IMR-90 (cell line): ENCODE measurements at regions of chr12 and their contacts with region 1.

Region 1: GRCh38 chr12:57782608-57783465 is at the start of gene TSFM:
- DNase-seq: peak; percentile 93
- ATAC-seq: peak; percentile 98
- H3K4me3 ChIP-seq: peak within 1 kb of the TSS; percentile 94
- H3K27ac ChIP-seq: peak within 1 kb of the TSS; percentile 73
- H3K4me1 ChIP-seq: 0 out of 2 replicates have a peak, but pooled peaks cover 2% of the 10 kb centered on the region
- H3K27me3 ChIP-seq: no peaks in the 10 kb centered on the region
- CTCF ChIP-seq: peak; percentile 97
- POLR2A ChIP-seq: peak; percentile 61
- RAD21 ChIP-seq: peak; percentile 50
- total RNA-seq, gene TSFM: 10.8 and 11.5 TPM in 2 replicates

Region 2: DNA sequence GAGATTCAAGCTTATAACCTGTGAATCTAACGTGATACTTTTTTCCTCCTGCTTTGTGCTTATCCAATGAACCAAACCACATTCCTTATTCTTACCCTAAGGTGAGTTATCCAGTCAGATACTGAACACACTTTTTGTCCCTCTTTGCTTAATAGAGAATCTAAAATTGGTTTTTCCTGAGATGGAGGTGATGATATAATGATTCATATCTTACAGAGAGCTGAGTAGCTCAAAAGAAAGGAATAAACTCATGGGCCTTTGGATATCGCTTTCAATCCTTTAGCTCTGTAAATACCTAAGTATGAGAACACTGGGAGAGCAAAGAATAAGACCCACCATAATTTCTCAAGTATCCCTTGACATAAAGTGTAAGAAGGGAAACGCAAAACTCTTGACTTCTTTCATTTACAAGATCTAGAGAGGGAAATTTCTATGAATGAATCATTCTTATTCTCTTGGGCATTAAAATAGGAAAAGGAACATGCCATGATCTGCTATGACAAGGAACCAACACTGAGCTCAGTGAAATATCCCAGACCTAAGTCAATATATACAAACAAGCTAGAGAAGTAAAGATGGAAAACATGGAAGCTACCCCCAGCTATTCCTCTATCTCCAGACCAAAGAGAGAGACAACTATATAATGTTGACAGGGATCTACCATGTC is 450.1 kb before region 1 on chr12:
- CTCF ChIA-PET with region 1: no interaction called
- POLR2A ChIA-PET with region 1: no interaction called
- dilution Hi-C with region 1: no loop called
- in situ Hi-C with region 1: no loop called
- intact Hi-C with region 1: no loop called
- DNase-seq: peak; percentile 25
- ATAC-seq: peak; percentile 37; the same call in 1 of the 2 replicates
- H3K4me3 ChIP-seq: no peak overlapping the region
- H3K27ac ChIP-seq: no peak overlapping the region
- H3K4me1 ChIP-seq: no peaks in the 10 kb centered on the region
- H3K27me3 ChIP-seq: no peaks in the 10 kb centered on the region
- CTCF ChIP-seq: no peak
- POLR2A ChIP-seq: no peak
- RAD21 ChIP-seq: no peak

Region 3: DNA sequence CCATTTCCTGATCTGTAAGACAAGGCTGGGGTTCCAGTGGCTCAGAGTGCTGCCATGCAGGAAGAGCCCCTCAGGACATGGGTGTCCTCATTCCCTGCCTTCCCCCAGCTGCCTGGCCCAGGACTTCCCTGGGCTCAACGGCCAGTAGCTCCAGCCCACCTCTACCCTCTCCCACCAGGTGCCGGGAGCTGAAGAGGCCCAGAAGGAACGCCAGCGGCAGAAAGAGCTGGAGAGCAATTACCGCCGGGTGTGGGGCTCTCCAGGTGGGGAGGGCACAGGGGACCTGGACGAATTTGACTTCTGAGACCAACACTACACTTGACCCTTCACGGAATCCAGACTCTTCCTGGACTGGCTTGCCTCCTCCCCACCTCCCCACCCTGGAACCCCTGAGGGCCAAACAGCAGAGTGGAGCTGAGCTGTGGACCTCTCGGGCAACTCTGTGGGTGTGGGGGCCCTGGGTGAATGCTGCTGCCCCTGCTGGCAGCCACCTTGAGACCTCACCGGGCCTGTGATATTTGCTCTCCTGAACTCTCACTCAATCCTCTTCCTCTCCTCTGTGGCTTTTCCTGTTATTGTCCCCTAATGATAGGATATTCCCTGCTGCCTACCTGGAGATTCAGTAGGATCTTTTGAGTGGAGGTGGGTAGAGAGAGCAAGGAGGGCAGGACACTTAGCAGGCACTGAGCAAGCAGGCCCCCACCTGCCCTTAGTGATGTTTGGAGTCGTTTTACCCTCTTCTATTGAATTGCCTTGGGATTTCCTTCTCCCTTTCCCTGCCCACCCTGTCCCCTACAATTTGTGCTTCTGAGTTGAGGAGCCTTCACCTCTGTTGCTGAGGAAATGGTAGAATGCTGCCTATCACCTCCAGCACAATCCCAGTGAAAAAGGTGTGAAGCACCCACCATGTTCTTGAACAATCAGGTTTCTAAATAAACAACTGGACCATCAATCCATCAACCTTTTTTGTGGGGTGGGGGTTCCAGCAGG is 61.9 kb before region 1 on chr12:
- CTCF ChIA-PET with region 1: no interaction called
- POLR2A ChIA-PET with region 1: no interaction called
- dilution Hi-C with region 1: no loop called
- in situ Hi-C with region 1: no loop called
- intact Hi-C with region 1: no loop called
- DNase-seq: no peak
- ATAC-seq: no peak
- H3K4me3 ChIP-seq: no peak overlapping the region
- H3K27ac ChIP-seq: no peak overlapping the region
- H3K4me1 ChIP-seq: no peaks in the 10 kb centered on the region
- H3K27me3 ChIP-seq: no peaks in the 10 kb centered on the region; the same call in 1 of the 2 replicates
- CTCF ChIP-seq: no peak
- POLR2A ChIP-seq: no peak
- RAD21 ChIP-seq: no peak

Region 4: DNA sequence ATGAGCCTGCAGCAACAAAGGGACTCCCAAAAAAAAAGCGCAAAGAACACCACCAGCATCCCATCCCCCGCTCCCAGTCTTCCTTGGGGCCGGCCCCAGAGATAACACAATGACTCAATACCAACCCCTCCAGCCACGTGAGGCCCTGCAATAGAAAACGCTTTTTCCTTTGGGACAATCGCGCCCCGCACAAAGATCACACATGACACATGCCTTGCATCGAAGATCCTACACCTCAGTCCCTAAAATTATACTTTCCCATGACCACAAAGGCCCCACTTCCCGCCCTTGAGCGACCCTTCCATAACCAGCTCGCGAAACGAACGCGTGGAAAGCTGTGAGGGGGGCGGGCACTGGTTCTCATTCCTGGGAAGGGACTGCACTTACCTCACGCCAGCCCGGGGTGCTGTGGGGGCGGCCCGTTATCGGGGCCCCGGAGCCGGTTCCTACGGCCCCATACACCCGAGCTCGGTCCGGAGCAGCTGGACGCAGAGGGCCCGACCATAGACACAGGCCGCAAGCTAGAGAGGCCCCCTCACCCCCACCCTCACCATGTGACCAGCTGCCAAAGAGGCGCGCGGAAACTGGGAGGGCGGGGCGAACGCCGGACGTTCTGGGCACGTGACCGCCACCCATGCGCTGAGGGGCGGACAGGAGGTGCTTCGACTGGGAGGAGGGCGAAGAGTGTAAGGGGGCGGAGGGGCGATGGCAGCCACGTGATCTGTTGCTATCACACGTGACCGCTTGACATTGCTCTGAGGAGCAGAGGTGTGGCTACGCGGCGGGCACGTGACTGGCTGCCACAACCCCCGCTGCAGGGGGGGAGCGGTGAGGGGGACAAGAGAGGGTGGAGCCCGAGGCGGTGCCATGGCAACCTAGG is 30.8 kb before region 1 on chr12 and contains the start of gene CDK4:
- CTCF ChIA-PET with region 1: no interaction called
- POLR2A ChIA-PET with region 1: no interaction called
- dilution Hi-C with region 1: no loop called
- in situ Hi-C with region 1: no loop called
- intact Hi-C with region 1: loop called (anchors 1 kb)
- DNase-seq: peak; percentile 100
- ATAC-seq: peak; percentile 82
- H3K4me3 ChIP-seq: peak within 1 kb of the TSS; percentile 59
- H3K27ac ChIP-seq: peak within 1 kb of the TSS; percentile 90
- H3K4me1 ChIP-seq: peaks cover 7% of the 10 kb centered on the region
- H3K27me3 ChIP-seq: peaks cover 10% of the 10 kb centered on the region
- CTCF ChIP-seq: no peak
- POLR2A ChIP-seq: peak; percentile 82; the same call in 1 of the 2 replicates
- RAD21 ChIP-seq: no peak
- total RNA-seq, gene CDK4: 239 and 297 TPM in 2 replicates